ENCODE measurements at regions of chr18 and their contacts with region 1.

Region 1: DNA sequence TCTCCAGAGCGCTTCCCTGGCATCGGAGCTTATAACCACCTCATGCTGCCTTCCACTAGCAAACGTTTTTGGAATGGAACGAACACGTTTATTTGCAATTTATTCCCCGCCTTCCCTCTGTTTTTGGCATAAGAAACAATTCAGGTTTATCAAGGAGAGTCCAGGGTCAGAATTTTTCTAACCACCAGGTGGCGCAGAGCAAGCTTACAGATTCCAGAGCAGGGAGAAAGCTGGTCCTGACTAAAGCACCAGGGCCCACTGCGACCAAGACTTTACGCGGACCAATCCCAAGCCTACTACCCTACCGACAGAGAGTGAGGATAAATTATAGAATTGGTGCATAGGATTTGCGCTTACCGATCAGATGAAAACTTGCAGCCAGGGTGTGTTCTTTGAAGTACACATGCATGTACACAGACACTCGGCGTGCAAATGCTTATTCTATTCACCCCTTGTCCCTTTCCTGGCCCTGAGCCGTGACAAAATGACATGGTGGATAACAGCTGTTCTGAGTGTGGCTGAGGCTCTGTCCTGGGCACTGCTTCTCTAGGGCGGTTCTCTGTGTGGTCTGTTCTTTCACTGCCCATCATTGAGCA is 34.7 kb downstream of the NAPG start:
- DNase-seq: peak; percentile 28
- ATAC-seq: peak; percentile 69
- H3K4me3 Mint-ChIP-seq: peak overlapping the region; percentile 67
- H3K27ac Mint-ChIP-seq: no peak overlapping the region
- H3K4me1 Mint-ChIP-seq: peaks cover 13% of the 10 kb centered on the region
- H3K27me3 Mint-ChIP-seq: no peaks in the 10 kb centered on the region
- CTCF ChIP-seq: peak; percentile 25

Region 2: DNA sequence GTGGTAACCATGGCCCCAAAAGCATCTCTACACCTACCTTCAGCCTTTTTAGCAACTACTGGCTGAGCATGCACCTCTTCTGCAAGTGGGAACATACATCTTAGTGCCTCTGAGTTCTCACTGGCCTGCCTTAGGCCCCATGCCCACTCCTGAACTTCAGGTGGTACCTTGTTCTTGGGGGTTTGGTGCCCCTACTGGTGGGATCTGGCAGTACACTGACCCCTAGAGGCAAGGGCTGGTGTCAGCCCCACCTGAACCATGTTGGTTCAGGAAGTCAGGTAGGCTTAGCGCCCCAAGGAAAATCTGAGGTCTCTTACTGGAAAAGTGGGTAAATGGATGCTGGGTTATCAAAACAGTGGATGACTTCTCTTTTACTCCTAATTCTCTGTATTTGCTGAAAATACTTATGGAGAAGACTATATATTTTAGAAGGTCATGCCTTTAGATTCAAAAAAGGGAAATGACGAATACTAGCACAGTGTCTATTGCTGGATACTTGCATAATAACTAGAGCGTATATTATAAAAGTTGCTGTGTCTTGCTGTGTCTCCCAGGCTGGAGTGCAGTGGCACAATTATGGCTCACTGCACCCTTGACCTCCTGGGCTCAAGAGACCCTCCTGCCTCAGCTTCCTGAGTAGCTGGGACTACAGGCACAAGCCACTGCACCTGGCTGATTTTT is 767.8 kb before region 1 on chr18:
- CTCF ChIA-PET with region 1: no interaction called
- POLR2A ChIA-PET with region 1: no interaction called
- intact Hi-C with region 1: no loop called
- DNase-seq: no peak
- ATAC-seq: peak; percentile 56
- H3K4me3 Mint-ChIP-seq: no peak overlapping the region
- H3K27ac Mint-ChIP-seq: no peak overlapping the region
- H3K4me1 Mint-ChIP-seq: no peaks in the 10 kb centered on the region
- H3K27me3 Mint-ChIP-seq: no peaks in the 10 kb centered on the region
- CTCF ChIP-seq: no peak

Region 3: GRCh38 chr18:10682368-10682714 is 121.8 kb after region 1 on chr18:
- CTCF ChIA-PET with region 1: interaction called, 4 read pairs
- POLR2A ChIA-PET with region 1: no interaction called
- intact Hi-C with region 1: loop called (anchors 1 kb)
- DNase-seq: no peak
- ATAC-seq: no peak
- H3K4me3 Mint-ChIP-seq: no peak overlapping the region
- H3K27ac Mint-ChIP-seq: no peak overlapping the region
- H3K4me1 Mint-ChIP-seq: no peaks in the 10 kb centered on the region
- H3K27me3 Mint-ChIP-seq: peaks cover 2% of the 10 kb centered on the region
- CTCF ChIP-seq: no peak

Region 4: GRCh38 chr18:10702206-10702605 is 141.7 kb after region 1 on chr18:
- CTCF ChIA-PET with region 1: no interaction called
- POLR2A ChIA-PET with region 1: no interaction called
- intact Hi-C with region 1: loop called (anchors 5 kb)
- DNase-seq: no peak
- ATAC-seq: no peak
- H3K4me3 Mint-ChIP-seq: no peak overlapping the region
- H3K27ac Mint-ChIP-seq: no peak overlapping the region
- H3K4me1 Mint-ChIP-seq: no peaks in the 10 kb centered on the region
- H3K27me3 Mint-ChIP-seq: peaks cover 4% of the 10 kb centered on the region
- CTCF ChIP-seq: no peak

Region 5: DNA sequence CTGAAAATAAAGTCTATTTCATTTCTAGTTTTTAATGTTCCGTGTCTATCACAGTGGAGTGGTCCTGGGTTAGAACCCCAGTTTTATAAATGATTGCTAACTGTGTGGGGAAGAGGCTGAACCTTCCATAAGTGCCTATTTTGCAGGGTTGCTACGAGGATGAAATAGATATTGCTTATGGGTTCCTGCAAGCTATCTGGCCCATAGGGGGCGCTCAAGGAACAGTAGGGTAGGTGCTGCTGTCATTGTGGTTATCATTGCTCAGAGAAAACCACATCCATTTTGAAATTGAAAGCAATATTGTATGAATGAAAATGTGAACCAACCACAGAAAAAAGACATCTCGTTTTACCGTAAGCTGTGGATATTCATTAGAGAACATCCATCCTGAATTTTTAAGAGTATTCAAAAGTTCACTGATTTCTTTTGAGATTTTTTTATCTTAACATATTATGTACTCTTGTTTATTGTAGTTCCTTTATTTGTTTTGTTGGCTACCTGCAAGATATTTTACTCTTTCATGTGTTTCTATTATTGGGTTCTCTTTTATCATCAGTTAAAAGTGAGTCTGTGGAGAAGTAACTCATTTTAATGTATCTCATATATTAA is 226.8 kb after region 1 on chr18:
- CTCF ChIA-PET with region 1: no interaction called
- POLR2A ChIA-PET with region 1: no interaction called
- intact Hi-C with region 1: loop called (anchors 2 kb)
- DNase-seq: peak; percentile 32
- ATAC-seq: peak; percentile 54
- H3K4me3 Mint-ChIP-seq: no peak overlapping the region
- H3K27ac Mint-ChIP-seq: no peak overlapping the region
- H3K4me1 Mint-ChIP-seq: no peaks in the 10 kb centered on the region
- H3K27me3 Mint-ChIP-seq: peaks cover 14% of the 10 kb centered on the region
- CTCF ChIP-seq: peak; percentile 52

Region 6: DNA sequence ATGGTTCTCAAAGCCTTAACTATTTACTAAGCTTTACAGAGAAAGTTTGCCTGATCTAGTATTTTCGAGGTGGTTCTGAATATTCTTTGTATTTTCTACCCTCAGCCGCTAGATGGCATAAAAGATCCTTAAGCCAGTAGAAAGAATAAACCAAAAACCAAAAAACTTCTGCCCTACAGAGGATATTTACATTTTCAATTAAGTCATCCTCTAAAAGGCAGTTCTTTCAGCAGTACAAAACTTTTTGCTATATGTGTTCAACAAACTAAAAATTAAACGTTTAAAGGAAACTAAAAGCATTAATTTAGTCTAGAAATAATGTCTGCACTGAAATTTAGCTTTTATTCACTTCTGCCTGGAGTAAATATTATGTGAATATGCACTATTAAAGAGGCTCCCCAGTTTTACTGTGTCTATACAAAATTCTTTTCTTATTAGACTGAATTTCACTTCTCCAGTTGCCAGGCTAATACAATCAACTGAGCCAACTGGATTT is 291.3 kb after region 1 on chr18:
- CTCF ChIA-PET with region 1: no interaction called
- POLR2A ChIA-PET with region 1: no interaction called
- intact Hi-C with region 1: no loop called
- DNase-seq: no peak
- ATAC-seq: no peak
- H3K4me3 Mint-ChIP-seq: no peak overlapping the region
- H3K27ac Mint-ChIP-seq: no peak overlapping the region
- H3K4me1 Mint-ChIP-seq: no peaks in the 10 kb centered on the region
- H3K27me3 Mint-ChIP-seq: peaks cover 11% of the 10 kb centered on the region
- CTCF ChIP-seq: peak; percentile 36

Region 7: GRCh38 chr18:11553098-11553940 is 992.8 kb after region 1 on chr18:
- CTCF ChIA-PET with region 1: no interaction called
- POLR2A ChIA-PET with region 1: no interaction called
- intact Hi-C with region 1: loop called (anchors 10 kb)
- DNase-seq: no peak
- ATAC-seq: peak; percentile 54
- H3K4me3 Mint-ChIP-seq: no peak overlapping the region
- H3K27ac Mint-ChIP-seq: no peak overlapping the region
- H3K4me1 Mint-ChIP-seq: peaks cover 6% of the 10 kb centered on the region
- H3K27me3 Mint-ChIP-seq: peaks cover 4% of the 10 kb centered on the region
- CTCF ChIP-seq: peak; percentile 61

Measured in activated B cell treated with CpG ODN at 0.5 μM for 24 hours (primary cell).